ENCODE measurements at regions of chr15 and their contacts with region 1.

Region 1: DNA sequence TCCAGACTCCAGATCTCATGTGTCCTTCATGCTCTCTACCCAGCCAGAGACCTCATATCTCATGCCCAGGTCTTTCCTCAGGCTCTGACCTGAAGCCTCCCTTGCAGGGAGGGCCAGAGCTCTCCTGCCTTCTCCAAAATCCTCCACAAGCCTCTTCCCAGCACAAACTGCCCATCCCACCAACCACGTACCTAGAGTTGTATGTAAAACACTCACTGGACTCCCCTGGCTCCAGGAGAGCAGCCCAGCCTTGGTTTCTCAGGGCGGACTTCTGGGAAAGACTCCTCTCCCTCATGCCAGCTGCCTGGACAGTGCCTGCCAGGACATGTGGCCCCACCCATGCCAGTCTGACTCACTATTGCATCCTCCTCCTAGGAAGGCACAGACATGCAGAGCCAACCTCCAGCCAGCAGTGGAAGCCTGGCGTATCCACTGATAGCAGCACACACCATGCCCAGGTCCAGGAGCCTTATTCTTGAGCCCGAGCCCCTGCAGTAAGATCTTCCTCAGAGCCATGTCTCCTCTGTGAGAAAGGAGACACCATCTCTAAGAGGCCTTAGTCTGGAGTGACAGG is 8.6 kb downstream of the PKM start:
- DNase-seq: no peak
- H3K4me3 Mint-ChIP-seq: peak overlapping the region; percentile 23
- H3K27ac Mint-ChIP-seq: peak overlapping the region; percentile 74
- H3K4me1 Mint-ChIP-seq: peaks cover 71% of the 10 kb centered on the region
- H3K27me3 Mint-ChIP-seq: no peaks in the 10 kb centered on the region

Region 2: GRCh38 chr15:70875001-70875782 is 1347.2 kb before region 1 on chr15:
- CTCF ChIA-PET with region 1: no interaction called
- POLR2A ChIA-PET with region 1: no interaction called
- intact Hi-C with region 1: no loop called
- DNase-seq: no peak
- H3K4me3 Mint-ChIP-seq: no peak overlapping the region
- H3K27ac Mint-ChIP-seq: no peak overlapping the region
- H3K4me1 Mint-ChIP-seq: no peaks in the 10 kb centered on the region
- H3K27me3 Mint-ChIP-seq: peaks cover 30% of the 10 kb centered on the region

Region 3: GRCh38 chr15:72206677-72207000 is 15.7 kb before region 1 on chr15:
- CTCF ChIA-PET with region 1: interaction called, 65 read pairs
- POLR2A ChIA-PET with region 1: interaction called, 17 read pairs
- intact Hi-C with region 1: loop called (anchors 1 kb)
- DNase-seq: no peak
- H3K4me3 Mint-ChIP-seq: no peak overlapping the region
- H3K27ac Mint-ChIP-seq: peak overlapping the region; percentile 79
- H3K4me1 Mint-ChIP-seq: peaks cover 40% of the 10 kb centered on the region
- H3K27me3 Mint-ChIP-seq: no peaks in the 10 kb centered on the region

Region 4: DNA sequence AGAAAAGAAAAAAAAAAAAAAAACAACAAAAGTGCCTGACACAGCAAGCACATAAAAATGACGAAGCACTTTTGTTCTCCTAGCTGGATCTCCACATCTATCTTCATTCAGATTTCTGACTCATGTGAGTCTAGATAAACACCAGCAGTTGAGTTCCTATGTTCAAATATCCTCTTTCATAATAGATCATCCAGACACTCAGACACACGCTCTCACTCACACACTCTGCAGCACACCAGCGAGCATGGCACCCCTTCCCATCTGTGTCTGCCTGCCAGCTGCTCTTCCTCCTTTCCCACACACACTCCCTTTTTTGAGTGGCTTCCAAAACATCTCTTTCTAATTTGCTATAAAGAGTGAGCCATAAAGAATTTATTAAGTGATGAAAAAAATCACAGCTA is 117.4 kb after region 1 on chr15:
- CTCF ChIA-PET with region 1: no interaction called
- POLR2A ChIA-PET with region 1: no interaction called
- intact Hi-C with region 1: no loop called
- DNase-seq: no peak
- H3K4me3 Mint-ChIP-seq: no peak overlapping the region
- H3K27ac Mint-ChIP-seq: no peak overlapping the region
- H3K4me1 Mint-ChIP-seq: no peaks in the 10 kb centered on the region
- H3K27me3 Mint-ChIP-seq: no peaks in the 10 kb centered on the region